ENCODE measurements at regions of chr12 and their contacts with region 1.

Region 1: DNA sequence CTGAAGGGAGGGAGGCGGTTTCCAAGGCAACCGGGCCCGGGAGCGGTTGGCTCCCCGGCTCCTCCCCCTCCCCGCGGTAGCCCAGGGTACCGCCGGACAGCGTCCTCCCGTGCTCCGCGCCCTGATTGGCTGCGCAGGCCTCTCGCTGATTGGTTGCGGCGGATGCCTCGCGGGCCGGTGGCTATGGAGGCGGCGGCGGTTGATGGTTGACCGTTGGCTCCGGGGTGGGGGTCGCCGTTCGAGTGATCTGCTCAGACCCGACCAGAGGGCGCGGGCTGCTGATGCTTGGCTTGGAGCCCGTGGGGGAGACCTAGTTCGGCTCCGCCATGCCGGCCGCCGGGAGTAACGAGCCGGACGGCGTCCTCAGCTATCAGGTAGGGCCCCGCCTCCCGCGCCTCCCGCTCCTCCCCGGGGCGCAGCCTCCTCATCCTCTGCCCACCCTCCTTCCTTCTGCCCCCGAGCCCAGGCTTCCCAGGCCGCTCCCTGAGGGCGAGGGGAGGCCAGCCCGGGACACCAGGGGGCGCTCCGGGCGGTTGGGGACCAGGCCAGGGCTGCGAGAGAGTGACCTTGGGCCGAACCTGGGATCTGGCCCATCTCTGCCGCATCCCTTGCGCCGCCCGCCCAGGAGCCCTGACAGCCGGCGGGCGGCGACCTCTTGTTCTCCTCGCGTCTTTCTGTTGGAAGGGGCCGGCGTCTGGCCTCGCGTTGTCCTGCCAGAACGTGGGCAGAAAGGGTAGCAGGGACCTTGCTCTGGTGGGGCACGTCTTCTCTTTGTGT is at the start of gene SLC4A8:
- DNase-seq: peak; percentile 85 to 96
- H3K4me3 ChIP-seq: peak within 1 kb of the TSS; percentile 52 to 79 (median 62)
- H3K27ac ChIP-seq: no peak within 1 kb of the TSS
- H3K4me1 ChIP-seq: peaks cover 0 to 10% (median 2%) of the 10 kb centered on the region in 4 experiments; a peak in 4 of 7 replicates
- H3K27me3 ChIP-seq: no peaks in the 10 kb centered on the region
- CTCF ChIP-seq: peak; percentile 66 to 83 (median 77)
- EP300 ChIP-seq: no peak
- POLR2A ChIP-seq: peak in 1 of 2 experiments; percentile 57; a peak in 1 of 3 replicates
- RAD21 ChIP-seq: peak; percentile 64 to 80
- total RNA-seq, gene SLC4A8: 13.4 and 15.2 TPM in 2 replicates

Region 2: DNA sequence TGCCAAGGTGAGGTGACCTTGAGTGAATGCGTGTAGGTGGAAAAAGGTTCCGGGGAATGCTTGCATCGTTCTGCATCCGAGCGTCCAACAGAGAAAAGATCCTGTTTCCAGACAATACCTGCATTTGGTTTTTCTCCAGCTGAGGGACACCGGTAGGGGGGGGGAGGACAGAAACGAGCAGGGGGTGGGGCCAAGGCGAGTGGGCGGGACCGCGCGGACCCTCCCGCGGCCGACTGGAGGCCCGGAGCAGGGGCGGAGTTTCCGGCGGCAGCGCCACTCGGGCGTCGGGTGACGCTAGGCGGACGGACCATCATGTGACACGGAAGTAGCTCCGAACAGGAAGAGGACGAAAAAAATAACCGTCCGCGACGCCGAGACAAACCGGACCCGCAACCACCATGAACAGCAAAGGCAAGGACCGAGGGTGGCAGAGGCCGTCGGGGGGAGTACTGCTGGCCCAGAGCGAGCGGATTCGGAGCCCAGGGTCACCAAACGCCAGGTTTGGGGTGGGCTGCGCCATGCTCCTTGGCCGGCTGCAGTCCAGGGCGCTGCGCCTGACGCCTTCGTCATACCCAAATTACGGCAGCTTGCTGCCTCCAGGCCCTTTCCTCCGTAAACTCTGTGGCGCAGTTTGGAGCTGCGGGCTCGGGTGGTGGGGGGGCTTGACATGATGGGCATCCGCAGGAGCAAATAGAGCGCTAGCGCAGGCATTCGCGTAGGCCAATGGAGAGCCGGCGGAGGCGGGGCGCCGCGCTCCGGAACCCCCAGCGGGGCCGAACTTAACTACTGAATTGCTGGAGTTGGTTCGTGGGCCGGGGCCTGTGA is 186.1 kb before region 1 on chr12 and contains the start of gene DAZAP2:
- CTCF ChIA-PET with region 1: no interaction called
- POLR2A ChIA-PET with region 1: no interaction called
- DNase-seq: peak; percentile 89 to 92
- H3K4me3 ChIP-seq: peak within 1 kb of the TSS; percentile 90 to 100 (median 99)
- H3K27ac ChIP-seq: peak within 1 kb of the TSS; percentile 99
- H3K4me1 ChIP-seq: peaks cover 0 to 9% (median 5%) of the 10 kb centered on the region in 4 experiments; a peak in 6 of 7 replicates
- H3K27me3 ChIP-seq: no peaks in the 10 kb centered on the region
- CTCF ChIP-seq: peak in 1 of 3 experiments; percentile 7; a peak in 1 of 4 replicates
- EP300 ChIP-seq: peak in 1 of 2 experiments; percentile 32; a peak in 1 of 3 replicates
- POLR2A ChIP-seq: peak; percentile 69 to 92
- RAD21 ChIP-seq: no peak
- total RNA-seq, gene DAZAP2: 24.9 and 27.1 TPM in 2 replicates

Region 3: GRCh38 chr12:51349031-51349430 is 75.8 kb before region 1 on chr12:
- CTCF ChIA-PET with region 1: no interaction called
- POLR2A ChIA-PET with region 1: no interaction called
- DNase-seq: no peak
- H3K4me3 ChIP-seq: no peak overlapping the region
- H3K27ac ChIP-seq: no peak overlapping the region
- H3K4me1 ChIP-seq: peaks cover 0 to 4% (median 2%) of the 10 kb centered on the region in 4 experiments; a peak in 1 of 7 replicates
- H3K27me3 ChIP-seq: no peaks in the 10 kb centered on the region
- CTCF ChIP-seq: no peak
- EP300 ChIP-seq: no peak
- POLR2A ChIP-seq: no peak
- RAD21 ChIP-seq: no peak

Region 4: DNA sequence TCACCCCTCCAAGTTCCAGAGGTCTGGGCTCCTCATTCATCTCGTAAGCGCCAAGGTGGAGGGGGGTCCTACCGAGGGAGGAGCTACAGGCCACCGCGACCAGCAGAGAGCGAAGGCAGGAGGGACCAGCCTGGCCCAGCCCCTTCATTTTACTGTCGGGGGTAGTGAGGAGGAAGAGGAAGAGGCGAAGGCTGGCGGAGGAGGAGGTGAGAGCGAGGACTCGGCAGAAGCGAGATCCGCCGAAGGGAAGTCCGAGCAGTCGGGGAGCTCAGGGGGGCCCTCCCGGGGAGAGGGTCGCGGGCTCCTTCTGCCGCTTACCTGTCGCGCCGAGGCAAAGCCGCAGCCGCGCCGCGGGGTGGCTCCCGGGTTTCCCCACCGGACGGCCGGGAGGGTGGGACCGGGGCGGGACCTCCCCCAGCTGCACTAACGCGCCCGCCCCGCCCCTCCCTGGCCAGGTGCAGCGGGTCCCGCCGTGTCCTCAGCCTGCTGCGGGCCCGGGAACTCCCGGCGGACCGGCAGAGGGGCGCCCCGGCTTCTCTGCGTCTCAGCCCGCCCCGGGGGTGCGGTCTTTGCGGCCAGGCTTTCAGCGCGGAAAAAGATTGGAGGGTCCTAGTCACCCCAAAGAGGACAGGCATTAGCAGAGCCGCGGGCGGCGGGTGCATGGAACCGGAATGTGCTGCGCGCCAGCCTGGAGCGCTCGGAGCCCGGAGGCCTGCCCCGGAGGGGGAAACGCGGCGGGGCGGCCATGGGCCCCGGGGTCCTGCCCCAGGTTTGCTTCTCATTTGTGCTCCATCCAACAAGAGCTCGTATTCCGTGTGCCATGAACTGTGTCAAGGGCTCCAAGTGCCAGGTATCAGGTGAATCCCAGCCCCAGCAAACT is 33.3 kb before region 1 on chr12 and contains the start of gene GALNT6:
- CTCF ChIA-PET with region 1: interaction called, 10 read pairs
- POLR2A ChIA-PET with region 1: interaction called, 4 read pairs
- DNase-seq: peak; percentile 78 to 92
- H3K4me3 ChIP-seq: peak within 1 kb of the TSS; percentile 68 to 88 (median 82)
- H3K27ac ChIP-seq: peak within 1 kb of the TSS; percentile 68; the same call in 1 of the 2 replicates
- H3K4me1 ChIP-seq: peaks cover 8 to 19% (median 9%) of the 10 kb centered on the region in 4 experiments
- H3K27me3 ChIP-seq: no peaks in the 10 kb centered on the region
- CTCF ChIP-seq: no peak
- EP300 ChIP-seq: no peak
- POLR2A ChIP-seq: peak; percentile 25 to 37
- RAD21 ChIP-seq: no peak
- total RNA-seq, gene GALNT6: 10.7 and 12.5 TPM in 2 replicates

Region 5: DNA sequence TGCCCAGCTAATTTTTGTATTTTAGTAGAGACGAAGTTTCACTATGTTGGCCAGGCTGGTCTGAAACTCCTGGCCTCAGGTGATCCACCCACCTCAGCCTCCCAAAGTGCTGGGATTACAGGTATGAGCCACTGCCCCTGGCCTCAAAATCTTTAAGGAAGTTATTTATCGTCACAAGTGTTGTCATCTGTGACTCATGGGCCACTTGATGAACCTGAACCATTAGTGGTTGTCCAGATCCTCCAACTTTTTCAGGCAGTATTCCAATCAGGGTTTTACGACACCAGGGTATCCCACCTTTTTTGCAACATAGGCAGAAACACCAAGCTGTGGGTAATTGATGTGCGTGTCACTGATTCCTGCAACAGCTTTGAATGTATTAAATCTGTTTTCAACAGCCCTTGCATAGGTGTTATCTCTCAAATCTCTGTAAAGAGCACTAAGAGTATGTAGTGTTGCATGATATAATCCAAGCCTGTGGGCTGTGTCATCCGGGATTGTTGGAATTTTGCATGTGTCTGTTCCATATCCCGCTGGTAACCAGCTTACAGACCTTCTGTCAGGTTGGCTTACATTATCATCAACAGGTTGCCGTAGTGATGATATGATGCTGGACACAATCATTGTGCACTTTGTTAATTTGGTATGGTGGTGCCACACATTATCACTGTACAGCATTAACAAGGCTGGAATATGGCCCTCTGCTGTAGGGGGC is 86.9 kb after region 1 on chr12:
- CTCF ChIA-PET with region 1: interaction called, 12 read pairs
- POLR2A ChIA-PET with region 1: no interaction called
- DNase-seq: no peak
- H3K4me3 ChIP-seq: no peak overlapping the region
- H3K27ac ChIP-seq: no peak overlapping the region
- H3K4me1 ChIP-seq: no peaks in the 10 kb centered on the region
- H3K27me3 ChIP-seq: no peaks in the 10 kb centered on the region; a peak in 1 of 7 replicates
- CTCF ChIP-seq: no peak
- EP300 ChIP-seq: no peak
- POLR2A ChIP-seq: no peak
- RAD21 ChIP-seq: no peak

Region 6: DNA sequence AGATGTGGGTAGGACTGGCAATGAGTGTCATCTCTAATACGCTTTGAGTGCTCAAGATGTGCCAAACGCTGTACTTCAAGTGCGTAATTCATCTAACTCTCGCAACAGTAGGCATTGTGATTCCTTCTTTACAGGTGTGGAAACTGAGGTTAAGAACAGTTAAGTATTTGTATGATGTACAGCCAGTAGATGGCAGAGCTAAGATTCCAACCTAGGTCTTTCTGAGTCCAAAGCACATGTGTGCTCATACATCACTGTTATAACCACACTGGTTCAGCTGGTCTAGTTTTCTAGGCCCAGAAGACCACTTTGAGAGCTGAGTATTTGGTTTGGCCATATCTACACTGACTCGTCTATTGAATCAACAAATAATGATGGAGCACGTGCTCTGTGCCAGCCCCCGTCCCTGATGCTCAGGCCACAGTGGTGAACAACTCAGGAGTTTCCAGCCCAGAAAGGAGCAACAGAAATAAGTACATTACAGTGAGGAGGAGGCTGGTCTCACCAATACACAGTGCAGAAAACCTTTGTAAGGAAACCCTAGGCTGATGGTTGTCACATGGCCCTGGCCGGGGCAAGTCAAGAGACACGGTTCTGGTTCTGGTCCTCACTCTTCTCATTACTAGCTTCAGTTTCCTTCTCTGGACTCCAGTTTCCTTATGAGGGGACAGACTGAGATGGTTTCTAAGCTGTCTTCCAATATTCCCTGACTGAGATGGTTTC is 96.9 kb after region 1 on chr12:
- CTCF ChIA-PET with region 1: interaction called, 137 read pairs
- POLR2A ChIA-PET with region 1: interaction called, 3 read pairs
- DNase-seq: no peak
- H3K4me3 ChIP-seq: no peak overlapping the region
- H3K27ac ChIP-seq: no peak overlapping the region
- H3K4me1 ChIP-seq: no peaks in the 10 kb centered on the region
- H3K27me3 ChIP-seq: no peaks in the 10 kb centered on the region; a peak in 1 of 7 replicates
- CTCF ChIP-seq: 0 out of 4 replicates have a peak, but pooled peaks of 1 of the 3 experiments have one; percentile 3
- EP300 ChIP-seq: no peak
- POLR2A ChIP-seq: no peak
- RAD21 ChIP-seq: 0 out of 4 replicates have a peak, but pooled peaks of 1 of the 2 experiments have one; percentile 4

Region 7: GRCh38 chr12:51531978-51532497 is 107.2 kb after region 1 on chr12:
- CTCF ChIA-PET with region 1: interaction called, 137 read pairs
- POLR2A ChIA-PET with region 1: no interaction called
- DNase-seq: peak; percentile 80 to 90
- H3K4me3 ChIP-seq: peak overlapping the region in 1 of 4 experiments; percentile 38; a peak in 2 of 8 replicates
- H3K27ac ChIP-seq: no peak overlapping the region
- H3K4me1 ChIP-seq: peaks cover 2 to 10% (median 5%) of the 10 kb centered on the region in 4 experiments; a peak in 5 of 7 replicates
- H3K27me3 ChIP-seq: no peaks in the 10 kb centered on the region; a peak in 1 of 7 replicates
- CTCF ChIP-seq: peak; percentile 85 to 98 (median 94)
- EP300 ChIP-seq: no peak
- POLR2A ChIP-seq: no peak
- RAD21 ChIP-seq: peak; percentile 92 to 95

Region 8: DNA sequence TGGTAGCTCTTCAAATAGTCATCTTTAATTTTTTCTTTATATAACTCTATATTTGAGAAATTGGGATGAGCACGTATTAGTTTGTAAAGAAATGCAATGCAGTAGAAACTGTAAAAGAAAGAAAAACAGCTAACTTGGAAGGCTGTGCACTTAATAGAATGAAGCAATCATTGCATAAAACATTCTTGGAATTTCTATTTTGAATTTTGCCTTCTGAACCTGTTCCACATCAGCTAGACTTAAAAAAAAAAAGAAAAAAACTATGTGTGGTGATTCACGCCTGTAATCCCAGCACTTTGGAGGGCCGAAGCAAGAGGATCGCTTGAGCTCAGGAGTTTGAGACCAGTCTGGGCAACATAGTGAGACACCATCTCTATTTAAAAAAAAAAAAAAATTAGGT is 195.6 kb after region 1 on chr12:
- CTCF ChIA-PET with region 1: no interaction called
- POLR2A ChIA-PET with region 1: no interaction called
- DNase-seq: no peak
- H3K4me3 ChIP-seq: no peak overlapping the region
- H3K27ac ChIP-seq: no peak overlapping the region
- H3K4me1 ChIP-seq: 0 out of 7 replicates have a peak, but pooled peaks cover 0 to 2% (median 0%) of the 10 kb centered on the region in 4 experiments
- H3K27me3 ChIP-seq: no peaks in the 10 kb centered on the region
- CTCF ChIP-seq: no peak
- EP300 ChIP-seq: no peak
- POLR2A ChIP-seq: no peak
- RAD21 ChIP-seq: no peak

Region 9: DNA sequence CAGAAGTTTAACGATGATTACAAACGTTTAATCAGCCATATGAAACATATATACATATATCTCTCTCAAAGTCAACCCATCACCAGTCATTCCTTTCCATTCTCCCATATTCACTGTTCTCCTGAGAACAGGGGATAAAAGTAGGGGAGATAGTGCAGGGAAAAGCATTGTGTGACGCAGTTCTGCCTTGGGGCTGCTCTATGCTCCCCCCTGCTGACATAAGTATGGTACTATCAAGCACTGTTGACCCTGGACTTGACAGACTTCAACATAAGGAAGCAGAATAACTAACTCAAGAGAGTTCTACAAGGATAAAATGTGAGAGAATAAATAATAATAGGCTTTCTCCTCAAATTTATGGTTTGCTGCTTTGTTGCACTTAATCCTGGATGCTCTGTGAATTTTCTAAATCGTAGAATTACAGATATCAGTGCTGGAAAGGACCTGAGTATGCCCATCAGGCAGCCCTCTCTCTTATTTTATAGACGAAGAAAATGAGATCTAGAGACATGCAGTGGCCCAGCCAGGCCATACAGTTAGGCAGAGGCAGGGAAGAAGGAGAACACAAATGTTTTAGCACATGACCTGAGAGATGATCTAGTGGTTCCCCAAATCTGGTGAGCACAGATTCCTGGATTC is 253.4 kb after region 1 on chr12:
- CTCF ChIA-PET with region 1: interaction called, 15 read pairs
- POLR2A ChIA-PET with region 1: no interaction called
- DNase-seq: no peak
- H3K4me3 ChIP-seq: no peak overlapping the region
- H3K27ac ChIP-seq: no peak overlapping the region
- H3K4me1 ChIP-seq: peaks cover 0 to 6% (median 2%) of the 10 kb centered on the region in 4 experiments; a peak in 1 of 7 replicates
- H3K27me3 ChIP-seq: peaks cover 0 to 1% (median 0%) of the 10 kb centered on the region in 4 experiments; a peak in 2 of 7 replicates
- CTCF ChIP-seq: peak; percentile 67 to 84 (median 67)
- EP300 ChIP-seq: no peak
- POLR2A ChIP-seq: no peak
- RAD21 ChIP-seq: peak; percentile 74 to 78